Ovary (tissue), 10 donors: ENCODE measurements at regions of chr3 and their contacts with region 1.

Region 1: DNA sequence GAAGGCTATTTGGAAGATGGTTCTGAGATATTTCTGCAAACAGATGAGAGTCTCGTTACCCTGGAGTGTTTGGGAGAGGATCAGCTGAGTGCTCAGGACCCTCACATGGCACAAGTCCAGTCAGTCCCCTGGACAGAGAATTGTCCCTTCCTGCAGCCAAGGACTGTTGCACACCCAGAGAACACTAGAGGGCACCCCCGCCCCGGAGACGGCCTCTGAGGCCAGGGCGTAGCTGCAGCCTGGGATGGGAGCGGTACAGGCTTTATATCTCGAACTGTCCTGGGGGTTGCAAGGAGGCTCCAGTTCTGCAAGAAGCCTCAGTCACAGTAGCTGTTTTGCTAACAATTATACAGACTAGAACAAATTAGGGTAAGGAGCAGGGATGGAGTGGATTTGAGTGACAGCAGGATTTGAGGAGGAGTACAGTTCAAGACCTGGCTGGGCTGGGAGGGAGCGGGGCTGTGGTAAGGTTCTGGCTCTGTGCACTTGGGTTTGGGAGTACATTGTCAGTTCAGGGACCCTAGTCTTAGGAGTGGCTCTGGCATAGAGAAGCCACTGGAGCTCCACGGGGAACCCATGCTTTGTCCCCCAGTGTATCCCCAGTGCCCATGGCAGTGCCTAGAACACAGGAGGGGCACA is 67.6 kb upstream of the HACD2 start:
- DNase-seq: peak; percentile 77 to 87 (median 85)
- H3K4me3 ChIP-seq: no peak overlapping the region
- H3K27ac ChIP-seq: peak overlapping the region in 1 of 2 donors; percentile 41
- H3K4me1 ChIP-seq: peaks cover 14% of the 10 kb centered on the region
- H3K27me3 ChIP-seq: no peaks in the 10 kb centered on the region
- CTCF ChIP-seq: peak; percentile 76 to 92 (median 86)
- EP300 ChIP-seq: no peak
- POLR2A ChIP-seq: no peak

Region 2: GRCh38 chr3:123700791-123701722 is 48.6 kb after region 1 on chr3:
- intact Hi-C with region 1: loop called (anchors 2 to 5 kb)
- DNase-seq: peak; percentile 76 to 84 (median 81)
- H3K4me3 ChIP-seq: peak overlapping the region; percentile 74
- H3K27ac ChIP-seq: peak overlapping the region; percentile 71 to 74
- H3K4me1 ChIP-seq: peaks cover 19% of the 10 kb centered on the region
- H3K27me3 ChIP-seq: no peaks in the 10 kb centered on the region
- CTCF ChIP-seq: no peak
- EP300 ChIP-seq: no peak
- POLR2A ChIP-seq: no peak

Region 3: GRCh38 chr3:123723522-123724168 is 71.2 kb after region 1 on chr3:
- intact Hi-C with region 1: loop called (anchors 1 to 5 kb)
- DNase-seq: peak in 4 of 5 donors; percentile 41 to 65 (median 56)
- H3K4me3 ChIP-seq: no peak overlapping the region
- H3K27ac ChIP-seq: no peak overlapping the region
- H3K4me1 ChIP-seq: no peaks in the 10 kb centered on the region
- H3K27me3 ChIP-seq: no peaks in the 10 kb centered on the region
- CTCF ChIP-seq: peak; percentile 45 to 76 (median 73)
- EP300 ChIP-seq: no peak
- POLR2A ChIP-seq: no peak